AG04449 (cell line): ENCODE measurements at regions of chr6 and their contacts with region 1.

Region 1: DNA sequence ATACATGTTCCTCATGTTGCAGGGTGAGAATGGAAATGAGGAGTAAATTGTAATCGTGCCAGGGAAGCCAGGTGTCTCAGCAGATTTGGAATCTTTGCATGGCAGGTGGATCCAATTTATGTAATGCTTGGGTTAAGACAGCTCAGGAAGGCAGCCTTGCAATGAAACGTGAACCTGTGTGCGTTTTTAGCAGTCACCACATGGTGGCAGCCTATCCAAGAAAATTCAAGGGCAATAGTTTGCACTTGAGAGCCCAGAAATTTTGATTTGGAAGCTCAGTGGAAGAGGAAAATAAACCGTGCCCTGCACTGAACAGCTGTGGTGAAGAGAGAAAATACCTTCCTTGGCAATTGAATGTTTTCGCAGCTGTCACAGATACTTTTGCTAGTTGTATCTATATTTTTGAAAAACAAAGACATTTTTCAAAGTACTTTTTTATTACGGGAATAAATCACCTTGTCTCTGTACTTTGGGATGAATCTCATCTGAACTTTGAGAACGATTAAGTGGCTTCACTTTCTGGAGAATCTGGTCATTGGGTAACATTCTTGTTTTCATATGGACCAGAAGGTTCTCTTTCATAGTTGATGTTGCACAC is 26.5 kb downstream of the MTHFD1L start:
- DNase-seq: peak; percentile 45
- H3K4me3 ChIP-seq: no peak overlapping the region
- CTCF ChIP-seq: peak; percentile 77

Region 2: GRCh38 chr6:150641398-150642139 is 250.4 kb before region 1 on chr6:
- CTCF ChIA-PET with region 1: no interaction called
- POLR2A ChIA-PET with region 1: no interaction called
- DNase-seq: no peak
- H3K4me3 ChIP-seq: no peak overlapping the region
- CTCF ChIP-seq: no peak

Region 3: GRCh38 chr6:150865406-150866146 is 26.4 kb before region 1 on chr6 and contains the start of gene MTHFD1L:
- CTCF ChIA-PET with region 1: interaction called, 14 read pairs
- POLR2A ChIA-PET with region 1: no interaction called
- DNase-seq: peak; percentile 60
- H3K4me3 ChIP-seq: peak within 1 kb of the TSS; percentile 78
- CTCF ChIP-seq: peak; percentile 72

Region 4: GRCh38 chr6:150902142-150902776 is 10.3 kb after region 1 on chr6:
- CTCF ChIA-PET with region 1: interaction called, 37 read pairs
- POLR2A ChIA-PET with region 1: interaction called, 3 read pairs
- DNase-seq: no peak
- H3K4me3 ChIP-seq: no peak overlapping the region
- CTCF ChIP-seq: no peak

Region 5: GRCh38 chr6:150915880-150916265 is 23.9 kb after region 1 on chr6:
- CTCF ChIA-PET with region 1: interaction called, 10 read pairs
- POLR2A ChIA-PET with region 1: no interaction called
- DNase-seq: no peak
- H3K4me3 ChIP-seq: no peak overlapping the region
- CTCF ChIP-seq: no peak

Region 6: DNA sequence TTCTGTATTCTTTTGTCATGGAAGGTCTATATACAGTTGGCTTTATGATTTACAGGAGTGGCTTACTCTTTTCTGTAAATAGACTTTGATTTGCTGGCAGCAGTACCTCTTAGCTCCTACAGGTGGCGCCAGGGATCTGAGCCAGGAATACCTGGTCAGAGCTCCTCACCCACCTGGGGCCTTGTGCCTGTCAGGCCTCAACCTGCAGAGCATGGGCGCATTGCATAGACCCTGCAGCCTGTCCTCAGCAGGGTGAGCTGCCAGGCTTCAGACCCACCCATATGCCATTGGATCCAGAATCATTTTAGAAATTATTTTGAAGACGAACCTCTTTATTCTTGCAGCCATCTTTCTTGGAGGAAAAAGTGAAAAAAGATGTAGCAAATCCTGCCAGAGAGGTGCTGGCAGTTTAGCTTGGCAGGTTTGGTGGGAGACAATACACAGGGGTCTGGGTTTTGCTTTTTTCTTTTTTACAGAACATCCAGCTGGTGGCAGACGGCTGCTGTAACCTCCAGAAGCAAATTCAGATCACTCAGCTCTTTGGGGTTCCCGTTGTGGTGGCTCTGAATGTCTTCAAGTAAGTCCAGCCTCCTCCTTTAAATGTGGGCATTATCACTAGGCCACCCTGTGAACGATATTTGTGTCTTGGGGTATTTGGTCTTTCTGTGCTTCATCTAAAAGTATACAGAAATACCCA is 122.6 kb after region 1 on chr6:
- CTCF ChIA-PET with region 1: interaction called, 14 read pairs
- POLR2A ChIA-PET with region 1: no interaction called
- DNase-seq: no peak
- H3K4me3 ChIP-seq: no peak overlapping the region; the same call in 1 of the 2 replicates
- CTCF ChIP-seq: peak; percentile 79

Region 7: DNA sequence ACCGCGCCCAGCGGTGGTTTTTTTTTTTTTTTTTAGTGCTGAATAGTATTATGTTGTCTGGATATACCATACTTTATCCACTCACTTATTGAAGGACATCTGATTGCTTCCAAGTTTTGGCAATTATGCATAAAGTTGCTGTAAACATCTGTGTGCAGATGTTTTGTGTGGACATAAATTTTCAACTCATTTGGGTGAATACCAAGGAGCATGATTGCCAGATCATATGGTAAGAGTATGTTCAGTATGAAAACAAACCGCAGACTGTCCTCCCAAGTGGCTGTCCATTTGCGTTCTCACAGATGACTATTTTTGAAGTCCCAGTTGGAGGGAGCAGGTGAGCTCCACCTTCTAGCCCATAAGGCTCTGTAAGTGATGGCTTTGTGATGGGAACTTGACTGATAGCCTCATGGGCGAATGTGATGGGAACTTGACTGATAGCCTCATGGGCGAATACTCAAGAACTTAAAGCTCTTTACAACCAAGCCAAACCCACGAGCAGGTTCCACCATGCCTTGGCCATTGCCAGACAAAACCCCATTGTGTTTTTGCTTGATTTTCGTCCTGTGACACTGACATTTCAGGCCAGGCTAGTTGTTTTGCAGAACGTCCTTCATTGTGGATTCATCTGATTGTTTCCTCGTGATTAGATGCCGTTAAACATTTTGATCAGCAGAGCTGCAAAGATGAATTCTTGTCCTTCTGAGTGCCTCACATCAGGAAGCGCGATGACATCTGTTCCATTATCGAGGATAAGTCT is 448.4 kb after region 1 on chr6:
- CTCF ChIA-PET with region 1: interaction called, 251 read pairs
- POLR2A ChIA-PET with region 1: no interaction called
- DNase-seq: no peak
- H3K4me3 ChIP-seq: no peak overlapping the region
- CTCF ChIP-seq: no peak